Astrocyte of the cerebellum (primary cell): ENCODE measurements at regions of chr12 and their contacts with region 1.

Region 1: GRCh38 chr12:110330544-110330943 is 49.5 kb downstream of the ATP2A2 start:
- DNase-seq: peak; percentile 22
- H3K4me3 ChIP-seq: no peak overlapping the region
- CTCF ChIP-seq: no peak

Region 2: DNA sequence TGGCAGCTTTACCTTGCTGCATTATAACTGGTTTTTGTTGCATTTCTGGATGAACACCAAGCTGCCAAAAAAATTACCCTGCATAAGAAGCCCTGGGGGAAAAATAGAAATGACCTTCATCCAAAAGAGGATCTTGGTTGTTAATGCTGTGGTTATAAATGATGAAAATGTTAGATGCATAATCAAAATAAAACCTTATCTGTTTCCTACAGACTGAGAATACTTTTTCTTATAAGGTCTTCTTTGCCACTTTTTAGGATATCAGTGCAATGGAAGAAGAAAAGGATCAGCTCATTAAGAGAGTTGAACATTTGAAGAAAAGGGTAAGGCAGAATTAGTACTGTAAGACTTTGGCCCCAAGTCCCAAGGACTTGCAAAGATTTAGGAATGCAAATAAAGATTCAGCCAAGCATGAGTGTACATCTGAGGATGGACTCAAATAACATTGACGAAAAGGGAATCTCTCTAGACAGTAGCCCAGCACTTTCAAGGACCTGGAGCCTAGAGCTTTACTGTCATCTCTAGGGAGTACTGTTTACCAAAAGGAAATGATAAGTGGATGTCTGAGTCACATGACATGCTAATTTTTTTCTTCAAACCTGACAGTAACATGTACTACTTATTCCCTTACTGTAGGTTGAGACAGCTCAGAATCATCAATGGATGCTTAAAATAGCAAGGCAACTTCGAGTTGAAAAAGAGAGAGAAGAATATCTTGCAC is 195.7 kb before region 1 on chr12:
- in situ Hi-C with region 1: no loop called
- DNase-seq: no peak
- H3K4me3 ChIP-seq: no peak overlapping the region
- CTCF ChIP-seq: no peak

Region 3: GRCh38 chr12:110289044-110289710 is 41.4 kb before region 1 on chr12:
- in situ Hi-C with region 1: loop called (anchors 5 kb)
- DNase-seq: no peak
- H3K4me3 ChIP-seq: no peak overlapping the region
- CTCF ChIP-seq: no peak

Region 4: DNA sequence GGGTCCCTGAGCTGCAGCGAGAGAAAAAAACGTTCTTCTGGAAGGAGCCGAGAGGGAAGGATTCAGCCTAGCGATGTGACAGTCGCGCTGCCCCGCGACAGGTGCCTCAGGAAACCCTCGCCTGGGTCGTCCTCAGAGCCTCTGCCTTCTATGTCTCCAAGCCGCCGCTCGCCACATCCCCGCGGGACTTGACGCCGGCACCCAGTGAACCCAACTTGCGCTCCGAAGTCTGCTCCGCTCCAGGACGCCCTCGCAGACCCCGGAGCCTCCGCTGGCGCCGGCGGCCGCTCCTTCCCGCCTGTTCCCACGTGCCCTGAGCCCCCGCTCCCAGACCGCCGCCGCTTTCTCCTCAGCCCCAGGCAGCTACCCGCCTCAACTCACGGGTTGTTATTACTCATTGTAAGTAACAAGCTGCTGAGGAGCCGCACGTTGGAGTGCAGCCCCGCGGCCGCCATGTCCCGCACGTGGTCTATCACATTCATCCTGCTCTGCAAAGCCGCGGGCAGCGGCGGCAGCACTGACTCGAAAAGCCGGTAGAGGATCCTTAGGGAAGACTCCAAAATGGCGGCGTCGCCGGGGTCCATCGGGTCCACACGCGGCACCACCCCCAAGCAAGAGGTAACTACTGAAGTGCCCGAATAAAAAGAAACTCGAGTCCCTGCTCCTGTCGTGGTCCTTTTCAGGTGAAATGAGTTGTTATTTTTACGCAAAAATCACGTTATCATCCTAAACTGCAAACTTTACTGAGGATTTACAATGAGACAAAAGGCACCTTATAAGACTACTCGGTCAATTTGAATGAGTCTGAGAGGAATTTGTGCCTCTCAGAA is 72.8 kb after region 1 on chr12 and contains the start of gene ANAPC7:
- in situ Hi-C with region 1: no loop called
- DNase-seq: peak; percentile 88
- H3K4me3 ChIP-seq: peak within 1 kb of the TSS; percentile 94
- CTCF ChIP-seq: peak; percentile 15